Sciatic nerve (tissue), 2 donors: ENCODE measurements at regions of chr15 and their contacts with region 1.

Region 1: DNA sequence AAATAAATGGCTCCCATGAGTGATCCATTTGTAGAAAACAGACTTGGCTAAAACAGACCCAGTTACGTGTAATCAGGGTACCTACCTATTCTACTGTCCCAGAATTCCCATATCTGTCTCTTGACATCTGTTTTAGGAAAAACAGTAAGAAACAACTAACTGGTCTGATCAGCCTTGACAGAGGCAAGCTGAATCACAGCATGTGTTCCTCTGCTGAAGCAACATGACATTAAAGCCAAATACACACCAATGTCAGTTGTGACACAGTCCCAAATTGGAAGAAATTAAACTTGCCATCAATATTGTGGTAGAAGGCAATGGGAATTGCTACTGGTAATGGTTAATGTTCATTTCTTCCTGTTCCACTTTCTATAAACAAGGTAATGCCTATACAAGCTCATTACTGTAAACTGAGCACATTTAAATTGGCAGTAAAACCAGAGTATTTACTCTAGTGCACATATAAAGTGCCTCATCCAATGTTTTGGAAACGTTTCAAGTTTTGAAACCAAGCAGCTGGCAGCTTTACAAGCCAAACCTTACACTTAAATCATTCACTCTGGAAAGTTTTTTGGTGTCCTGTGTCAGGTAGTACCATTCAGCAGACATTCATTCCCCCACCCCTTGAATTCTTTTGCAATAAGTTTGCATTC is 27.0 kb downstream of the ALDH1A2 start:
- DNase-seq: no peak
- ATAC-seq: no peak

Region 2: DNA sequence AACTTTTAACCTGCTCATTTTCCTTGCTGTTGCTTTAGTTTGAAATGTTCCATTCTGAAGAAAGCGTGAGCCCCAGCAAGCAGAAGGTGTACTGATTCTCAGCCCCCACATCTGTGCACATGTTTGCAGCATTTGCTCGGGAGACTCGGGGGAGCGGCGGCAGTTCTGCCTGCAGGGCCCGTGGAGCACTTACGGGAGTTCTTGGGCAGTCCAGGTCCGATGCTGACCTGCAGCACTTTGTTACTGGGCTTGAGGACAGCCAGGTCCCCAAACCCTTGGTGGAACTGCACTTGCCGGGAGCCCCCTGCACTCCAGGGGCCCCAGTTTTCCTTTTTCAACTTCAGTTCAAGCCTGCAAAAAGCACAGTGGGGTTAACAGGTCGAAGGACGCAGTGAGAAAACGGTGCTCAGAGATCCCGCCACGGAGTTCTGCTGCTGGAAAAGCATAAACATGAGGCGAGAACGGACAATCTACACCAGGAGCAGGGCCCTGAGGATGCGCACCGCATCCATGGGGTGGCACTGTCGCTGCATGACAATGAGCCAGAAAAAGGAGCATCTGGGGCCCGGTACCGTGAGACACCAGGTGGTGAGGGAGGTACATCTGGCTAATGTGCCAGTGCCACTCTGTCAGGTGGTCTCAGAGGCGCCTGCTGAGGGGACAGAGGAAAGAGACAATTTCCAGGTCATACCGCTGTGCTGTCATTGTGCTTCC is 1122.5 kb after region 1 on chr15:
- intact Hi-C with region 1: loop called (anchors 5 kb)
- DNase-seq: no peak
- ATAC-seq: no peak